Calu3 (cell line): ENCODE measurements at regions of chr6 and their contacts with region 1.

Region 1: GRCh38 chr6:69835414-69836179 is 30.8 kb upstream of the COL19A1 start:
- DNase-seq: peak; percentile 27
- H3K4me3 Mint-ChIP-seq: no peak overlapping the region
- H3K27ac Mint-ChIP-seq: no peak overlapping the region
- H3K4me1 Mint-ChIP-seq: no peaks in the 10 kb centered on the region
- H3K27me3 Mint-ChIP-seq: no peaks in the 10 kb centered on the region
- CTCF ChIP-seq: peak; percentile 63

Region 2: DNA sequence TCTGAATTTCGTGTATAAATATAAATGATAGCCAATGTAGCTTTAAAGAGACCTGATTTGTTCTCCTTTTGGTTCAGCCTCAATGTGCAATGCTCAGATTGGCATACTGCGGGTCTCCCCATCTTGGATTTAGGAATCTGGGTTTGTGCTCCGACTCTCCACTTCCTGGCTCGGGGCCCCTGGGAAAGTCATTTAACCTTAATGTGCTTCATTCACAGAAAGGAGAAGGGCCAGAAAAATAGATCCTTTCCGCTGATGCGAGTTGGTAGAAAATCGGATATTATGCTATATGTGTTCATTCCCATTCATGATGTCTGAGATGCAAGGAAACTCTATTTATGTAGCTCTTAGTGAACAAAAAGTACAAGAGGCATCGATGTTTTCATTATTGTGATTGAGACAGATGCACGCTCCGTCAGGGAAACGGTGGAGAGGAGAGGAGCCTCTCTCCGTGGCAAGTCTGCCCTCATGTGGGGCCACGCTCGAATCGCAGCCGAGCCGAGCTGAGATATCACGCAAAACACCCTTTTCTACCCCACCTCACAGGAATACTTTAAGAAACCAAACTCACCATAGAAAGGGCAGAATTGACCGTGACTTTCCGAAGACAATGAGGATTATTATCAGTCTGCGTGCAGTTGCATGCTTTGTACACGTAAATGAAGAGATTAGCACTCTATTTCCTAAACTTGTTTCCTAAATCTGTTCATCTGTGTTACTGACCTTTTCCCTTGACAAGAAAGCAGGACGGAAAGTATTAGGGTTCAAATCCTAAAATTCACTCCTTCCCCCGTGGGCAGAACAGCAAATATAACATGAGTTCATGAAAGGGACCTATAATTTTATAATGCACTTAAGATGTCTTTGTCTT is 330.7 kb after region 1 on chr6:
- CTCF ChIA-PET with region 1: no interaction called
- intact Hi-C with region 1: loop called (anchors 2 kb)
- DNase-seq: peak; percentile 77
- H3K4me3 Mint-ChIP-seq: peak overlapping the region; percentile 56
- H3K27ac Mint-ChIP-seq: no peak overlapping the region
- H3K4me1 Mint-ChIP-seq: peaks cover 16% of the 10 kb centered on the region
- H3K27me3 Mint-ChIP-seq: peaks cover 44% of the 10 kb centered on the region
- CTCF ChIP-seq: peak; percentile 68